Left cardiac atrium (tissue), 4 donors: ENCODE measurements at regions of chr3 and their contacts with region 1.

Region 1: GRCh38 chr3:172039436-172040077 is at the start of gene FNDC3B:
- DNase-seq: peak; percentile 94
- ATAC-seq: peak; percentile 88 to 91
- total RNA-seq, gene FNDC3B: 82.4 to 98.3 TPM

Region 2: DNA sequence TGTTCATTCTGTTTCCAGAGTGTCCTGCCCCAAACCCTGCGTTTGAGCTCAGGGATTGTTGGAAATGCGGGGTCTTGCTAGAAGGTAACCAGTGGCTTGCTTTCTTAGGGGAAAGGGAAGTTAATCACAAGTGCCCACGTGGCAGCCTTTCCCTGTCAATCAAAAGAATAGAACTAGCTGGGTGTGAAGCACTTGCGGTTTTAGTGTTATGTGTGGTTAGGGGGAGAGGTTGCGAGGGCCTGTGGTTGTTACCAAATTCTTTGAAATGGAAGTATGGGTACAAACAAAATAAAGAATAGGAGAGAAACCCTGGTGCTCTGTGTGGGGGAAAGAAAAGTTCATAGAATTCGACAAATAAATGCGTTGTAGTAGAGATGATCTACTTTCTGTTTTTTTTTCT is 67.4 kb after region 1 on chr3:
- intact Hi-C with region 1: loop called in 1 of 2 experiments (anchors 5 kb)
- DNase-seq: peak; percentile 29
- ATAC-seq: peak; percentile 26 to 51

Region 3: DNA sequence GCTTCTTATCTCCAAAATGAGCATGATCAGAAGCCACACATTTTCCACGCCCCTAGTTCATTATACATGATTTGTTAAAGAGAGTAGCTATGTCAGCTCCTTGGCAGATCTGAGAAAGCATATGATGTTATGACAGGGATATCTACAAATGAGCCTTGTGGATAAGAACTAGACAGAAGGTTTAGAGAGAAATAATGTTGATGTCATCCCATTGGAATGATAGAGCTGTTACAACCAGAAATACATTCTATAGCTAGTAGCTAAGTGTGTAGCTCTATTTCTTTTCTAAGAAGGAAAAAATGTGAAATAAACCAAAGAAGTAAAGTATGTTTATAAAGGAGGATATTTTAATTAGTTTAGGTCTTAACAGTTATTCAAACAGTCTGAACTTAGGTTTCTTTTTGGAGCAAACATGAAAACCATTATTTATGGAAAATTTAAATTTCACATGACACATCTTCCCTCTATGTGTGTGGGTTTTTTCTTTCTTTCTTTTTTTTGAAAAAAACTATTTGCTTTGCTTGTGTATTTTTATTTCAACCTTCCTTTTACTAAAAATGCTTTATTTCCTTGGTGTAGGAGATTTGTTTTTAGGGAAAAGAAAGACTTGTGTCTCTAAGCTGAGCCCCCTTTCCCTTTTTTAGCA is 241.0 kb after region 1 on chr3:
- intact Hi-C with region 1: loop called in 1 of 2 experiments (anchors 5 kb)
- DNase-seq: no peak
- ATAC-seq: peak in 1 of 2 donors; percentile 82

Region 4: DNA sequence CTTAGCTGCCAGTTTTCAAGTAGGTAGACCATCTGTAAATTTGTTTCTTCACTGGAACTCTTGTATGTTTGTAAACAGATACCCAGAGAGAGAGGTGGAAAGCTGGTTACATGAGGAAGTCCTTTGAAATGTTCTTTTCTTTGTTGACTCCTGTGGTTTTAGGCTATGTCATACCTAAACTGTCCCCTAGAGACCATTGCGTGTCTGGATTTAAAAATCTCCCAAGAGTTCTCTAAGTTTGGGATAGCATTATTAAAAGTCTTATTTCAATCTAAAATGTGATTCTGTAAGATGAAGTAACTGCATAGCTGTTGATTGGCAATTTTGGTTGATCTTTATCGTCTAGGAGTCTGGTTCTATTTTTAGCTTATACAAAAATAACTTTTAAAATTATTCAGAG is 281.5 kb after region 1 on chr3:
- intact Hi-C with region 1: loop called in 1 of 2 experiments (anchors 10 kb)
- DNase-seq: no peak
- ATAC-seq: no peak

Region 5: GRCh38 chr3:172332256-172333041 is 292.9 kb after region 1 on chr3:
- intact Hi-C with region 1: loop called (anchors 5 to 10 kb)
- DNase-seq: peak; percentile 55
- ATAC-seq: peak; percentile 89